ENCODE measurements at regions of chr11 and their contacts with region 1.

Region 1: GRCh38 chr11:14300661-14301304 is 58.2 kb downstream of the RRAS2 start:
- DNase-seq: peak; percentile 63
- H3K4me3 Mint-ChIP-seq: no peak overlapping the region
- H3K27ac Mint-ChIP-seq: no peak overlapping the region
- H3K4me1 Mint-ChIP-seq: peaks cover 12% of the 10 kb centered on the region
- H3K27me3 Mint-ChIP-seq: no peaks in the 10 kb centered on the region

Region 2: GRCh38 chr11:14454861-14455632 is 154.3 kb after region 1 on chr11:
- CTCF ChIA-PET with region 1: interaction called, 22 read pairs
- POLR2A ChIA-PET with region 1: no interaction called
- DNase-seq: no peak
- H3K4me3 Mint-ChIP-seq: no peak overlapping the region
- H3K27ac Mint-ChIP-seq: no peak overlapping the region
- H3K4me1 Mint-ChIP-seq: peaks cover 4% of the 10 kb centered on the region
- H3K27me3 Mint-ChIP-seq: no peaks in the 10 kb centered on the region